Left ventricle myocardium inferior (tissue), 1 donor: ENCODE measurements at regions of chr11 and their contacts with region 1.

Region 1: GRCh38 chr11:46889689-46890475 is 28.5 kb downstream of the LRP4 start:
- DNase-seq: peak; percentile 19
- H3K4me3 ChIP-seq: no peak overlapping the region
- H3K27ac ChIP-seq: no peak overlapping the region
- H3K4me1 ChIP-seq: no peaks in the 10 kb centered on the region
- H3K27me3 ChIP-seq: no peaks in the 10 kb centered on the region
- CTCF ChIP-seq: peak; percentile 91

Region 2: DNA sequence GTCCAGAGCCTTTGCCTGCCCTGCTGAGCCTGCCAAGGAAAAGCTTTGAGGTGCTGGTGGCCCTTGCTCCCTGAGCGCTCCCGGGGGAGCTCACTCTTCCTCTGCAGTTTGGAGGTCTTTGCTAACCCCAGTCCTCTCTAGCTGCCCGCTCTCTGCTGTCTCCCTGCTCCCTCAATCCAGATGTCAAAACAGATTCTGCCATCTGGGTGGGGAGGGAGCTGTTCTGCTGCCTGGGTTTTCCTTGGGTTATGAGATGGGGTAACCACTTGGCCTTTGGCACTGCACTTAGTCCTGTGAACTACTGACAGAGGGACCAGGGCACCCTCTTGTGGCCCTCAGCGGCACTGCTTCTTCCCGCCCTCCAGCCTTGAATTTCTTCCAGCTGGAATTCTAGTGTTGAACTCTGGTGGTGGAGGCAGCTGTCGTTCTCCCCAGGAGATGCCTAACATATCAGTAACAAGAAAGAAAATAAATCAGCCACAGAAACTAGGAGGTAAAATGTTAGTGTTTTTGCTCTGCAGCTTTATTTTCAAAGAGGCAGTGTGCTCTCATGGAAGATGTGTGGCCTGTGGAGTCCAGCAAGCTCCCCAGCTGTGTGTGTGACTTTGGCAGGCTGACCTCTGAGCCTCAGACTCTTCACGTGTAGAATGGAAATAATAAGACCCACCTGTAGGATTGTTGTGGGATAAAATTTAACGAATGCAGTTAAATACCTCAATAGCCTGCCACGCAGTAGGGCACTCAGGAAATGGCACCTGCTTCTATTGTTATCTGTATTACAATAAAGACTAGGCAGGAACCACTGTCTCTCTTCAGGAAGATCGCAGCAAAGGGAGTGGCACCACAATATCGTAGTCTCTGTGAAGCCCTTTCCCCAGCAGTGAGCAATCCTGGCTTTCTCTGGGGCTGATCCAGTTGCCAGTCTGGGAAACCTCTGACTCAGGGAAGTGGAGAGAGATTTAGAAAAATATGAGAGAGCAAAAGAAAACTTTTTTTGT is 263.4 kb after region 1 on chr11:
- intact Hi-C with region 1: loop called (anchors 2 kb)
- DNase-seq: peak; percentile 81
- H3K4me3 ChIP-seq: no peak overlapping the region
- H3K27ac ChIP-seq: peak overlapping the region; percentile 20
- H3K4me1 ChIP-seq: peaks cover 28% of the 10 kb centered on the region
- H3K27me3 ChIP-seq: no peaks in the 10 kb centered on the region
- CTCF ChIP-seq: peak; percentile 98